WTC11 (cell line): ENCODE measurements at regions of chr7 and their contacts with region 1.

Region 1: GRCh38 chr7:101856473-101857357 is 39.3 kb downstream of the CUX1 start:
- DNase-seq: peak; percentile 26
- ATAC-seq: peak; percentile 31
- H3K4me3 Mint-ChIP-seq: no peak overlapping the region; the same call in 1 of the 2 replicates
- H3K27ac Mint-ChIP-seq: peak overlapping the region; percentile 95
- H3K4me1 Mint-ChIP-seq: peaks cover 92% of the 10 kb centered on the region
- H3K27me3 Mint-ChIP-seq: no peaks in the 10 kb centered on the region
- CTCF ChIP-seq: no peak

Region 2: DNA sequence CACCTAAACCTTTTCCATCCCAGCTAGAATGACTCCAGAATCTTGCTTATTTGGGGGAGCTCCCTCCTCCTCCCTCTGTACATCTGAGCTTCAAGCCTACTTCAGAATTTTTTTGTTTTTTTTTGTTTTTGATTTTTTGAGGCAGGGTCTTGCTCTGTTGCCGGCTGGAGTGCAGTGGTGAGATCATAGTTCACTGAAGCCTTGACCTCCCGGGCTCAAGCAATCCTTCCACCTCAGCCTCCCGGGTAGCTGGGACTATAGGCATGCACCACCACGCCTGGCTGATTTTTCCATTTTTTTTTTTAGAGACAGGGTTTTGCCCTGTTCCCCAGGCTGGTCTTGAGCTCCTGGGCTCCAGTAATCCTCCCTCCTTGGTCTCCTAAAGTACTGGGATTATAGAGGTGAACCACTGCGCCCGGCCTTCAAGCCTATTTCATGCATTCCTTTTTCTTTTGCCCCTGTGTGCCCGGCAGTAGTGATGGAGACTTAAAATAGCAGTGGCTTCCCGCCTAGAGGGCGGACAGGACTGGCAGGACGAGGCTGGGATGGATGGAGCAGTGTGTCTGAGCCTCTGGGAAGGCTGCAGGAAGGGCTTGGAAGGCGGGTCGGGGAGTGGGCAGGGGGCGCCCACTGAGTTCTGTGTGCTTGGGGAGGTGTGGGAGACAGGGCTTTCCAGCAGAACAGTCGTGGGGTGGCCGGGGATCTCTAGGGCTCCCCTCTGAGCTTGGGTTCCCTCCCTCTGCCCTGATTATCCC is 30.5 kb before region 1 on chr7:
- CTCF ChIA-PET with region 1: interaction called, 18 read pairs
- POLR2A ChIA-PET with region 1: no interaction called
- DNase-seq: peak; percentile 11
- ATAC-seq: no peak
- H3K4me3 Mint-ChIP-seq: no peak overlapping the region
- H3K27ac Mint-ChIP-seq: peak overlapping the region; percentile 41; the same call in 1 of the 2 replicates
- H3K4me1 Mint-ChIP-seq: peaks cover 69% of the 10 kb centered on the region
- H3K27me3 Mint-ChIP-seq: no peaks in the 10 kb centered on the region
- CTCF ChIP-seq: no peak

Region 3: GRCh38 chr7:101870351-101871062 is 13.8 kb after region 1 on chr7:
- CTCF ChIA-PET with region 1: interaction called, 13 read pairs
- POLR2A ChIA-PET with region 1: no interaction called
- DNase-seq: peak; percentile 57
- ATAC-seq: peak; percentile 79
- H3K4me3 Mint-ChIP-seq: peak overlapping the region; percentile 44
- H3K27ac Mint-ChIP-seq: peak overlapping the region; percentile 95
- H3K4me1 Mint-ChIP-seq: peaks cover 74% of the 10 kb centered on the region
- H3K27me3 Mint-ChIP-seq: no peaks in the 10 kb centered on the region
- CTCF ChIP-seq: no peak